ENCODE measurements at regions of chr16 and their contacts with region 1.

Region 1: GRCh38 chr16:28140788-28141618 is 70.8 kb downstream of the XPO6 start:
- DNase-seq: peak; percentile 92
- H3K4me3 Mint-ChIP-seq: peak overlapping the region; percentile 84
- H3K27ac Mint-ChIP-seq: peak overlapping the region; percentile 95
- H3K4me1 Mint-ChIP-seq: peaks cover 78% of the 10 kb centered on the region
- H3K27me3 Mint-ChIP-seq: no peaks in the 10 kb centered on the region

Region 2: GRCh38 chr16:28035866-28036393 is 105.1 kb before region 1 on chr16:
- intact Hi-C with region 1: no loop called
- DNase-seq: no peak
- H3K4me3 Mint-ChIP-seq: no peak overlapping the region
- H3K27ac Mint-ChIP-seq: no peak overlapping the region
- H3K4me1 Mint-ChIP-seq: no peaks in the 10 kb centered on the region
- H3K27me3 Mint-ChIP-seq: no peaks in the 10 kb centered on the region

Region 3: GRCh38 chr16:28166394-28167208 is 25.6 kb after region 1 on chr16:
- intact Hi-C with region 1: loop called (anchors 2 kb)
- DNase-seq: peak; percentile 68
- H3K4me3 Mint-ChIP-seq: peak overlapping the region; percentile 11
- H3K27ac Mint-ChIP-seq: peak overlapping the region; percentile 61
- H3K4me1 Mint-ChIP-seq: peaks cover 67% of the 10 kb centered on the region
- H3K27me3 Mint-ChIP-seq: no peaks in the 10 kb centered on the region

Region 4: GRCh38 chr16:28182183-28182582 is 41.2 kb after region 1 on chr16:
- intact Hi-C with region 1: loop called (anchors 1 kb)
- DNase-seq: peak; percentile 75
- H3K4me3 Mint-ChIP-seq: peak overlapping the region; percentile 82
- H3K27ac Mint-ChIP-seq: peak overlapping the region; percentile 99
- H3K4me1 Mint-ChIP-seq: peaks cover 72% of the 10 kb centered on the region
- H3K27me3 Mint-ChIP-seq: no peaks in the 10 kb centered on the region

Region 5: DNA sequence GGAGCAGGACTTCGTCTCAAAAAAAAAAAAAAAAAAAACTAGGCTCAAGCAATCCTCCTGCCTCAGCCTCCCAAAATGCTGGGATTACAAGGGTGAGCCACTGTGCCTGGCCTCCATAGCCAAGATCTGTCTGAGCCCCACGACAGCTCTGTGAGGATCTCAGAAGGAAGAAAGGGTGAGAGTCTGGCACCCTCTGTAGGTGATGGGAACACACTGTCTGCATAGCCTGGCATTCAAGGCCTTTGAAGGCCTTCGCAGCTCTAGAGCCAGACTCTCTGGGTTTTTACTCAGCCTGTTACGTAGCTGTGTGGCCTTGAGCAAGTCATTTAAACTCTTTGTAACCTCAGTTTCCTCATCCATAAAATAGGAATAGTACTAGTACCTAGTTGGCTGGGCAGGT is 77.1 kb after region 1 on chr16:
- intact Hi-C with region 1: loop called (anchors 1 kb)
- DNase-seq: peak; percentile 90
- H3K4me3 Mint-ChIP-seq: no peak overlapping the region
- H3K27ac Mint-ChIP-seq: no peak overlapping the region
- H3K4me1 Mint-ChIP-seq: peaks cover 2% of the 10 kb centered on the region
- H3K27me3 Mint-ChIP-seq: no peaks in the 10 kb centered on the region

Region 6: DNA sequence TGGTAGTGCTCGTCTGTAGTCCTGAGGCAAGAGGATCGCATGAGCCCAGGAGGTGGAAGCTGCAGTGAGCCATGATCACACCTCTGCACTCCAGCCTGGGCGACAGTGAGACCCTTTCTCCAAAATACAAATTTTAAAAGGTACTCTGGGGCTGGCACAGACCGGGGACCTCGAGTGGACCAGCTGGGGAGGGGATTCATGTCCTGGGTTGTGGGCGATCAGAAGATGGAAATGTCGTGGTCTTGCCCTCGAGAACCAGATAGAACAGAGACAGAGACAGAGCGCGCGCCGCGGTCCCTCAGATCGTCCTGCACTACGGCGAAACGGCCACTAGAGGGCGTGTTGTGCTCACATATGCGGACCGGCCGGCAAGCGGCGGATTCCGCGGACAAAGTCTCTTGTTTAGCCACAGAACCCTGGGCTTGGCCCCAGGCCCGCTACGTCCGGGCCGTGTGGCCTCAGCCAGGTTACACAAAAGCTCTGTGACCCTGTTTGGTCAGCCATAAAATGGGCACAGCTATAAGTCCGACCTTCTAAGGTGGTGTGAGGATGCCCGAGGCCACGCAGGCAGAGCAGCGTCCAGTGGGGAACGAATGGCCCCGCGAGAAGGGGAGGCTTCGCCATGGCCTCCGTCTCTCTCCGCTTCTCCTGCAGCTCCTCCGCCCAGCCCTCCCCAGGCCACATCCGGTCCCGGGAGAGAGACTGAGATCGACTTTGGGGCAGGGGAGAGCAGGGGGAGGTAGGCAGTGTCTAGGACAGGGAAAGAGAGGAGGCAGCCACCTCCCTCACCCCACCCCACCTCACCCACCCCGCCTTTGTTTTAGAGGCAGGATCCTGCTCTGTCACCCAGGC is 136.8 kb after region 1 on chr16:
- intact Hi-C with region 1: loop called (anchors 5 kb)
- DNase-seq: peak; percentile 95
- H3K4me3 Mint-ChIP-seq: peak overlapping the region; percentile 77
- H3K27ac Mint-ChIP-seq: peak overlapping the region; percentile 60
- H3K4me1 Mint-ChIP-seq: peaks cover 28% of the 10 kb centered on the region
- H3K27me3 Mint-ChIP-seq: peaks cover 23% of the 10 kb centered on the region